Gastrocnemius medialis (tissue), 4 donors: ENCODE measurements at regions of chr3 and their contacts with region 1.

Region 1: GRCh38 chr3:98022978-98023820 is 11.9 kb downstream of the GABRR3 start:
- DNase-seq: peak; percentile 60 to 74
- ATAC-seq: peak; percentile 41 to 76
- H3K4me3 ChIP-seq: no peak overlapping the region
- H3K27ac ChIP-seq: no peak overlapping the region
- H3K4me1 ChIP-seq: peaks cover 0 to 6% of the 10 kb centered on the region in 2 donors
- H3K27me3 ChIP-seq: no peaks in the 10 kb centered on the region
- CTCF ChIP-seq: peak; percentile 90 to 97 (median 94)
- POLR2A ChIP-seq: no peak

Region 2: DNA sequence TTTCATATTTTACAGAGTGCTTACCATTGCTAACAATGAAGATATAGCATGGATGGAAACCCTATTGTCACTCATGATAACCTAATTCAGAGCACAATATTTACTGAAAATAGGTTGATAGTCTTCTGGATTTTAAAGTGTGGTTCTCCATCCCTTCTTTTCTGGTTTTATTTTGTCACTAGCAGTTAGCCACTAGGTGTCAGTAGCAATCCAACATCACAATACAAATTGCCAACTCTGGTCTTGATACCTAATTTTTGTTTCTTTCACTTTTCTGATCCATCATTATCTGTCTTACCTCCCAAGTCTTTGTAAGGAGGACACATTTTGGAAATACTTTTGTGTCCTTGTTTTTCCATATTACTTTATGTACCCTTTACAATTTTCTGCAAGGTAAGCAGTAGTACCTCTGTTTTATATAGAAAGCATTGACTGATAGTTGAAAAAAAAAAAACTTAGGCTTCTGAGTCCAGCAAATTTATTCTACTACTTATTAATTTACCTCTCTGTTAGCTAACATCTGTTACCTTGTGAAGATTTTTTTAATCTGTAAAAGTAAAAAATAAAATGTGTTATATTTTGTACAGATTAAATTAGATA is 229.7 kb before region 1 on chr3:
- in situ Hi-C with region 1: loop called (anchors 5 kb)
- intact Hi-C with region 1: loop called (anchors 1 kb)
- DNase-seq: no peak
- ATAC-seq: no peak
- H3K4me3 ChIP-seq: no peak overlapping the region
- H3K27ac ChIP-seq: no peak overlapping the region
- H3K4me1 ChIP-seq: peaks cover 0 to 3% of the 10 kb centered on the region in 2 donors
- H3K27me3 ChIP-seq: no peaks in the 10 kb centered on the region
- CTCF ChIP-seq: peak; percentile 69 to 82 (median 76)
- POLR2A ChIP-seq: no peak

Region 3: GRCh38 chr3:97882975-97883598 is 140.1 kb before region 1 on chr3:
- in situ Hi-C with region 1: no loop called
- intact Hi-C with region 1: no loop called
- DNase-seq: no peak
- ATAC-seq: peak in 1 of 2 donors; percentile 21
- H3K4me3 ChIP-seq: no peak overlapping the region
- H3K27ac ChIP-seq: peak overlapping the region in 3 of 4 donors; percentile 0 to 19 (median 5)
- H3K4me1 ChIP-seq: peaks cover 0 to 5% of the 10 kb centered on the region in 2 donors
- H3K27me3 ChIP-seq: no peaks in the 10 kb centered on the region
- CTCF ChIP-seq: no peak
- POLR2A ChIP-seq: no peak

Region 4: GRCh38 chr3:97957617-97958311 is 65.4 kb before region 1 on chr3:
- in situ Hi-C with region 1: loop called in 1 of 4 experiments (anchors 10 kb)
- intact Hi-C with region 1: loop called (anchors 5 kb)
- DNase-seq: peak; percentile 89
- ATAC-seq: peak; percentile 96 to 98
- H3K4me3 ChIP-seq: no peak overlapping the region
- H3K27ac ChIP-seq: peak overlapping the region; percentile 82 to 86 (median 84)
- H3K4me1 ChIP-seq: peaks cover 33 to 37% of the 10 kb centered on the region in 2 donors
- H3K27me3 ChIP-seq: no peaks in the 10 kb centered on the region
- CTCF ChIP-seq: no peak
- POLR2A ChIP-seq: peak in 1 of 2 donors; percentile 54

Region 5: GRCh38 chr3:97971677-97972567 is 51.3 kb before region 1 on chr3 and contains the start of gene RIOX2:
- in situ Hi-C with region 1: no loop called
- intact Hi-C with region 1: loop called (anchors 5 kb)
- DNase-seq: peak; percentile 68 to 76
- ATAC-seq: peak; percentile 89 to 90
- H3K4me3 ChIP-seq: peak within 1 kb of the TSS; percentile 66 to 93 (median 82)
- H3K27ac ChIP-seq: peak within 1 kb of the TSS; percentile 91 to 99 (median 96)
- H3K4me1 ChIP-seq: peaks cover 21 to 28% of the 10 kb centered on the region in 2 donors
- H3K27me3 ChIP-seq: no peaks in the 10 kb centered on the region
- CTCF ChIP-seq: peak in 2 of 5 experiments; percentile 23 to 33
- POLR2A ChIP-seq: peak; percentile 89 to 94
- total RNA-seq, gene RIOX2: 27.4 to 57.3 (median 49.6) TPM

Region 6: GRCh38 chr3:98048586-98048985 is 25.4 kb after region 1 on chr3:
- in situ Hi-C with region 1: no loop called
- intact Hi-C with region 1: no loop called
- DNase-seq: no peak
- ATAC-seq: no peak
- H3K4me3 ChIP-seq: no peak overlapping the region
- H3K27ac ChIP-seq: no peak overlapping the region
- H3K4me1 ChIP-seq: no peaks in the 10 kb centered on the region
- H3K27me3 ChIP-seq: no peaks in the 10 kb centered on the region
- CTCF ChIP-seq: no peak
- POLR2A ChIP-seq: no peak